ENCODE measurements at regions of chr21 and their contacts with region 1.

Region 1: GRCh38 chr21:23853796-23854379 is 1753.4 kb downstream of the MRPL39 start:
- DNase-seq: no peak
- H3K4me3 Mint-ChIP-seq: no peak overlapping the region
- H3K27ac Mint-ChIP-seq: no peak overlapping the region
- H3K4me1 Mint-ChIP-seq: peaks cover 7% of the 10 kb centered on the region
- H3K27me3 Mint-ChIP-seq: no peaks in the 10 kb centered on the region

Region 2: DNA sequence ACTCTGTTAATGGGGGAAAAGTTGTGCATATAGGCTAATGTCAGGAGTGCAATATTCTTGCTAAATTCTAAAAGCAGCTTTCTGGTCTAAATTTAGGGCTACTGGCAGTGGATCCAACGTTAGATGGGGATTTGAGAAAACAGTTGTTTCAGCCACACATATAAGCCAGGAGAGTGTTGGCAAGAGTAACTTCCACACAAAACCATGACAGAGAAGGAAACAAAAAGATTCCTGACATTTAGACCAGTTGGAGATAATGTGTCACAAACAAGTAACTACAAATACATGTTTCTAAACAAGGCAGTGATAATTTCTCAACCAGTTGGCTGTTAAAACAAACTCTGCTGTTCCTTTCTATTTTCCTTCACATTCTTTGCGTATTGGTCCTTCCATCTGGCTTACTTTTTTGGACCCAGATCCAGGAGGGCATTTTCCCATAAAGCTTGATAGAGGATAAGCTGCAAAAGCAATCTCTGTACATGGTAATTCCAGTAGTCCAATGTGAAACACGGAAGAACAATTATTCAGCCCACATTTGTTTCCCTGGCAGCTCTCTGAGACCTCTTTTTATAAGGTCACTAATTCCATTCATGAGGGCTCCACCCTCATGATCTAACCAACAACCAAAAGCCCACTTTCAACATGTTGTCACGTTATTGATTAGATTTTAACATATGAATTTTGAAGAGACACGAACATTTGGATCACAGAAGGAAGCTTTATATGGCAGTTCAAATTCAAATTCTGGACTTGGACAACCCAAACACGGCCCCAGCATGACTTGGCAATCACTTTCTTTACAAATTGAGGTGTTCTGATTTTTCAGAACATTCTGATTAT is 135.2 kb before region 1 on chr21:
- intact Hi-C with region 1: no loop called
- DNase-seq: no peak
- H3K4me3 Mint-ChIP-seq: no peak overlapping the region
- H3K27ac Mint-ChIP-seq: no peak overlapping the region
- H3K4me1 Mint-ChIP-seq: no peaks in the 10 kb centered on the region
- H3K27me3 Mint-ChIP-seq: no peaks in the 10 kb centered on the region

Region 3: DNA sequence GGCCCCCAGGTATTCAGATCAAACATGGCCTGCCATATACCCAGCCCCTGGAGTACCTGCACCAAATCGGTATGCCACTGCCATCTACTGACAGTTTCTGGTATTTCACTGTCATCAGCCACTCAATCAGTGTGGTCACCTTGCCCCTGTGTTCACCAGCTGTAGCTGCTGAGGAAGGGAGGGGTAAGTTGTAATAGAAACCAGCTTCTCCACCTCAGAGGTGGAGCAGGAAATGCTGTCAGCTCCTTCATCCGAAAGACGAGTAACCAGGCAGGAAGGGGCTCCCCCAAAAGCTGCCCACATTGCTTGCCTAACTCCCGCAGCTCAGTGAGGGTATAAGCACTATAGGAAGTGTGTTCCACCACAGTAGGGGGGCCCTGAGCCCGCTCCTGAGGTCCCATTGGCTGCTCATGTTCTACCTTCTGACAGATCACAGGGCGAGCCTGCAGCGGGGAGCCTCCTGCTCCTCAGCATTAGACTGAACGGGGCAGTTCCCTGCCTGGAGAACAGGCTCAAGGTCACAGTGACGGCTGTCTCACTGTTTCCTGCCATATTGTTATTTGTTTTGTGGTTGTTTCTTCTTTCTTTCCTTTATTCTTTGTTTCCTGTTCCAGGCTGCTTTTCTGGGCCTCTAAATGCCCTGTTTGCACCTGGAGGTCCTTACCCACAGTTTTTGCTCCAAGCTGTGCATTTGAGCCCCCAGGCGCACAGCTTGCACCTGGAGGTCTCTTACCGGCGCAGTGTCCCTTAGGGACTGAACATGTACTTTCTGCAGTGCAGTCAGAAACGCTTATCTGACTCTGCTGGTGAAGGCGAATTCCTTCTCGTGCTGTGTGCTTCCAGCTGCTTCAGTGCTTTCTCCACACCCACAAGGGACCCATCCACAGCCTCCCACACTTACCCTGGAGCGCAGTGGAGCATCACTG is 115.1 kb after region 1 on chr21:
- intact Hi-C with region 1: loop called (anchors 1 kb)
- DNase-seq: peak; percentile 83
- H3K4me3 Mint-ChIP-seq: peak overlapping the region; percentile 38
- H3K27ac Mint-ChIP-seq: peak overlapping the region; percentile 67
- H3K4me1 Mint-ChIP-seq: peaks cover 16% of the 10 kb centered on the region
- H3K27me3 Mint-ChIP-seq: peaks cover 14% of the 10 kb centered on the region

Region 4: DNA sequence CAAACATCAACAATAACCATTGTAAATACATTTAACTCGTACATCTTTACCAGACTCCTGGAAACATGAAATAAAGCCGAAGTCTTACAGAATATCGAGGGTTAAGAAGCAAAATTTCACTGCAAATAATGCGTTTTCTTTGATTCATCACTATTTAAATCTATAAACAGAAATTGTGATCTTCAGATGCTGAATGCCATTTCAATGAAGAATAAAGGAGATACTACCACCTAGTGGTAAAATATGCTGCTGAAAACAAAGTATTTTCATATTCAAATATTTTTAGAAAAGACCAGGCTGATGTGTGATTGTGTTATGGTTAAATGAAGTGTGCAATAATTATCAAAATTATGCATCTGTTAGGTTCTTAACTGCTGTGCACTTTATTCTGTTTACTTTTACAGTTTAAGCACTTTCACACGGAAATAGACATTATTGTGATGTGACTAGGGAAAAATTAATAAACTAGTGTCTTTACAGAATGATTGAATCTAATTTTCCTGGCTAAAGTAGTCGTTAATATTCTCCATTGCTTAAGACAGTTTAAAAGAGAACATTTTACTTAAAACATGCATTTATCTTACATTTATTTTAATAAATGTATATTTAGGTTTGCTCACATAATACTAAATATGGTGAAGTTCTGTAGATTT is 660.3 kb after region 1 on chr21:
- intact Hi-C with region 1: loop called (anchors 10 kb)
- DNase-seq: no peak
- H3K4me3 Mint-ChIP-seq: no peak overlapping the region
- H3K27ac Mint-ChIP-seq: no peak overlapping the region
- H3K4me1 Mint-ChIP-seq: no peaks in the 10 kb centered on the region
- H3K27me3 Mint-ChIP-seq: no peaks in the 10 kb centered on the region

Measured in activated T-helper 2 cell treated with anti-CD3 and anti-CD28 coated beads, Interferon-gamma antibody, Interleukin-2, Interleukin-4, amounts not matched to agents 10 μg/mL and 5 μg/mL and 100 μg/mL, durations not matched to agents 14 hours and 24 hours and 36 hours (primary cell).